ENCODE measurements at regions of chr4 and their contacts with region 1.

Region 1: GRCh38 chr4:98995183-98996055 is at the start of gene METAP1:
- DNase-seq: peak; percentile 96
- H3K4me3 Mint-ChIP-seq: peak within 1 kb of the TSS; percentile 75
- H3K27ac Mint-ChIP-seq: peak within 1 kb of the TSS; percentile 84
- H3K4me1 Mint-ChIP-seq: peaks cover 14% of the 10 kb centered on the region
- H3K27me3 Mint-ChIP-seq: no peaks in the 10 kb centered on the region
- CTCF ChIP-seq: peak; percentile 58
- total RNA-seq, gene METAP1: 43.5 and 61.4 TPM in 2 replicates

Region 2: GRCh38 chr4:98626350-98626749 is 369.1 kb before region 1 on chr4:
- CTCF ChIA-PET with region 1: no interaction called
- POLR2A ChIA-PET with region 1: no interaction called
- intact Hi-C with region 1: no loop called
- DNase-seq: peak; percentile 91
- H3K4me3 Mint-ChIP-seq: peak overlapping the region; percentile 43
- H3K27ac Mint-ChIP-seq: peak overlapping the region; percentile 86
- H3K4me1 Mint-ChIP-seq: peaks cover 36% of the 10 kb centered on the region
- H3K27me3 Mint-ChIP-seq: no peaks in the 10 kb centered on the region
- CTCF ChIP-seq: no peak

Region 3: GRCh38 chr4:98733601-98734000 is 261.8 kb before region 1 on chr4:
- CTCF ChIA-PET with region 1: no interaction called
- POLR2A ChIA-PET with region 1: no interaction called
- intact Hi-C with region 1: no loop called
- DNase-seq: no peak
- H3K4me3 Mint-ChIP-seq: no peak overlapping the region
- H3K27ac Mint-ChIP-seq: no peak overlapping the region
- H3K4me1 Mint-ChIP-seq: no peaks in the 10 kb centered on the region
- H3K27me3 Mint-ChIP-seq: no peaks in the 10 kb centered on the region
- CTCF ChIP-seq: no peak

Region 4: GRCh38 chr4:98928505-98929340 is 66.7 kb before region 1 on chr4 and contains the start of gene EIF4E:
- CTCF ChIA-PET with region 1: interaction called, 22 read pairs
- POLR2A ChIA-PET with region 1: interaction called, 68 read pairs
- intact Hi-C with region 1: loop called (anchors 2 kb)
- DNase-seq: peak; percentile 99
- H3K4me3 Mint-ChIP-seq: peak within 1 kb of the TSS; percentile 96
- H3K27ac Mint-ChIP-seq: peak within 1 kb of the TSS; percentile 93
- H3K4me1 Mint-ChIP-seq: peaks cover 13% of the 10 kb centered on the region
- H3K27me3 Mint-ChIP-seq: no peaks in the 10 kb centered on the region
- CTCF ChIP-seq: no peak
- total RNA-seq, gene EIF4E: 104 and 106 TPM in 2 replicates

Region 5: DNA sequence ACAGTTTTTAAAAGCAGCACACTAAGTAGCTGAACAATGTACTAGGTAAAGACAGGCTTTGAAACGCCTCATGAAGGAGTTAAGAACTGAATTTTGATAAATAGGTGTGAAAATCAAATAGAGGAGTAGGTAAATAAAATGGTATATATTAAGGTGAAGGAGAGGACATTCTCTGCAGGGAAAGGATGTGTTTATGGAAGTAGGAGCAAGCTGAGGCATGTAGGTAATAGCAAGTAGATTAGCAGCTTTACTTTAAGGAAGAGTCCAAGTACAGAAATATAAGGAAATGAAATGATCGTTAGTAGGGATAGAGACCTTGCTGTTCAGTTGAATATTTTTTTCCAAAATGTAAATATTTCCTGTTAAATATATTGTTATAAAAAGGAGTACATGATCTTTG is 12.6 kb after region 1 on chr4:
- CTCF ChIA-PET with region 1: interaction called, 37 read pairs
- POLR2A ChIA-PET with region 1: interaction called, 54 read pairs
- intact Hi-C with region 1: no loop called
- DNase-seq: no peak
- H3K4me3 Mint-ChIP-seq: no peak overlapping the region
- H3K27ac Mint-ChIP-seq: peak overlapping the region; percentile 43
- H3K4me1 Mint-ChIP-seq: peaks cover 21% of the 10 kb centered on the region
- H3K27me3 Mint-ChIP-seq: no peaks in the 10 kb centered on the region
- CTCF ChIP-seq: no peak

Region 6: GRCh38 chr4:99054428-99054994 is 59.1 kb after region 1 on chr4:
- CTCF ChIA-PET with region 1: interaction called, 155 read pairs
- POLR2A ChIA-PET with region 1: interaction called, 32 read pairs
- intact Hi-C with region 1: loop called (anchors 1 kb)
- DNase-seq: no peak
- H3K4me3 Mint-ChIP-seq: no peak overlapping the region
- H3K27ac Mint-ChIP-seq: no peak overlapping the region
- H3K4me1 Mint-ChIP-seq: peaks cover 14% of the 10 kb centered on the region
- H3K27me3 Mint-ChIP-seq: no peaks in the 10 kb centered on the region
- CTCF ChIP-seq: no peak

Region 7: GRCh38 chr4:99088481-99089365 is 93.3 kb after region 1 on chr4 and contains the start of gene ADH5:
- CTCF ChIA-PET with region 1: interaction called, 7 read pairs
- POLR2A ChIA-PET with region 1: interaction called, 42 read pairs
- intact Hi-C with region 1: loop called (anchors 1 kb)
- DNase-seq: peak; percentile 84
- H3K4me3 Mint-ChIP-seq: peak within 1 kb of the TSS; percentile 89
- H3K27ac Mint-ChIP-seq: peak within 1 kb of the TSS; percentile 72
- H3K4me1 Mint-ChIP-seq: peaks cover 35% of the 10 kb centered on the region
- H3K27me3 Mint-ChIP-seq: no peaks in the 10 kb centered on the region
- CTCF ChIP-seq: no peak
- total RNA-seq, gene ADH5: 110 and 112 TPM in 2 replicates

Region 8: DNA sequence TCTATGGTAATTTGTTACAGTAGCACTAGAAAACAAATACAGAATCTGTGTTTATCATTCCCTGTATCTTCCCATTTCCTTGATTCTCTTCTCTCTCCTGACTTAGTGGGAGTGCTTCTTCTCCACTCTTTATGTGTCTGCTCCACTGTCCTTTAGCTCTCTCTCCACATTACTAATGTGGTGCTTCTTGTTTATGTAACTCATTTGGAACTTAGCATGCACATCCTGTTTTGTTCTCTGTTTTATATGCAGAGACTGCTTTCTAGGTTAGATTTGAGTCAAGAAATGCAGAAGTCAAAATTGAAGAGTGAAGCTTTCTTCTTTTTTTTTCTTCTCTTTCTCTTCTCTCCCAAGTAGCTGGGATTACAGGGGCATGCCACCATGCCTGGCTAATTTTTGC is 269.5 kb after region 1 on chr4:
- CTCF ChIA-PET with region 1: no interaction called
- POLR2A ChIA-PET with region 1: no interaction called
- intact Hi-C with region 1: no loop called
- DNase-seq: no peak
- H3K4me3 Mint-ChIP-seq: no peak overlapping the region
- H3K27ac Mint-ChIP-seq: no peak overlapping the region
- H3K4me1 Mint-ChIP-seq: no peaks in the 10 kb centered on the region
- H3K27me3 Mint-ChIP-seq: no peaks in the 10 kb centered on the region
- CTCF ChIP-seq: no peak

Region 9: DNA sequence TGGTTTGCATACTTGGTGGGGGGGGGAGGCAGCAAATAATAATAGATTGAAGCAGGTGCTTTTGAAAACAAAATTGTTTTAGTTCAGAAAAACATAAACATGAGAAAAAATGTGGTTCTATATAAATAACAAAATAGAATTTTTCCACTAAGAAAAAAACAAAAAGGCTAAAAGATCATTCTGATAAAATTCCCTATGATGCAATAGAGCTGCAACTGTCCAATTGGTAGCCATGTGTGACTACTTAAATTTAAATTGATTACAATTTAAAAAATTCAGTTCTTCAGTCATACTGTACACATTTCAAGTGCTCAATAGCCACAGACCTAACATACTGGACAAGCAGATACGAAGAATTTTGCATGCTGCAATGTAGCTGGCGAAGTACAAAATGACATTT is 557.5 kb after region 1 on chr4:
- CTCF ChIA-PET with region 1: no interaction called
- POLR2A ChIA-PET with region 1: no interaction called
- intact Hi-C with region 1: no loop called
- DNase-seq: no peak
- H3K4me3 Mint-ChIP-seq: no peak overlapping the region
- H3K27ac Mint-ChIP-seq: no peak overlapping the region
- H3K4me1 Mint-ChIP-seq: no peaks in the 10 kb centered on the region
- H3K27me3 Mint-ChIP-seq: no peaks in the 10 kb centered on the region
- CTCF ChIP-seq: no peak